H1 (cell line): ENCODE measurements at regions of chr7 and their contacts with region 1.

Region 1: GRCh38 chr7:50119815-50120637 is 27.0 kb upstream of the ZPBP start:
- DNase-seq: peak; percentile 1 to 53
- H3K4me3 ChIP-seq: no peak overlapping the region
- H3K27ac ChIP-seq: no peak overlapping the region
- H3K4me1 ChIP-seq: no peaks in the 10 kb centered on the region
- H3K27me3 ChIP-seq: no peaks in the 10 kb centered on the region
- CTCF ChIP-seq: peak; percentile 66 to 86 (median 81)
- EP300 ChIP-seq: no peak
- POLR2A ChIP-seq: no peak
- RAD21 ChIP-seq: peak; percentile 79 to 83

Region 2: GRCh38 chr7:50142425-50143017 is 22.5 kb after region 1 on chr7:
- CTCF ChIA-PET with region 1: interaction called, 13 read pairs
- POLR2A ChIA-PET with region 1: interaction called, 3 read pairs
- DNase-seq: no peak
- H3K4me3 ChIP-seq: no peak overlapping the region
- H3K27ac ChIP-seq: no peak overlapping the region
- H3K4me1 ChIP-seq: no peaks in the 10 kb centered on the region
- H3K27me3 ChIP-seq: no peaks in the 10 kb centered on the region
- CTCF ChIP-seq: peak in 1 of 3 experiments; percentile 48; a peak in 2 of 4 replicates
- EP300 ChIP-seq: no peak
- POLR2A ChIP-seq: no peak
- RAD21 ChIP-seq: peak; percentile 57 to 58